OCI-LY7 (cell line): ENCODE measurements at regions of chr19 and their contacts with region 1.

Region 1: GRCh38 chr19:10565567-10566407 is at the start of gene KRI1:
- DNase-seq: peak; percentile 99
- H3K4me3 ChIP-seq: peak within 1 kb of the TSS; percentile 94
- H3K27ac ChIP-seq: peak within 1 kb of the TSS; percentile 81
- H3K4me1 ChIP-seq: peaks cover 33% of the 10 kb centered on the region
- CTCF ChIP-seq: peak; percentile 52
- total RNA-seq, gene KRI1: 44.9 and 53.6 TPM in 2 replicates

Region 2: DNA sequence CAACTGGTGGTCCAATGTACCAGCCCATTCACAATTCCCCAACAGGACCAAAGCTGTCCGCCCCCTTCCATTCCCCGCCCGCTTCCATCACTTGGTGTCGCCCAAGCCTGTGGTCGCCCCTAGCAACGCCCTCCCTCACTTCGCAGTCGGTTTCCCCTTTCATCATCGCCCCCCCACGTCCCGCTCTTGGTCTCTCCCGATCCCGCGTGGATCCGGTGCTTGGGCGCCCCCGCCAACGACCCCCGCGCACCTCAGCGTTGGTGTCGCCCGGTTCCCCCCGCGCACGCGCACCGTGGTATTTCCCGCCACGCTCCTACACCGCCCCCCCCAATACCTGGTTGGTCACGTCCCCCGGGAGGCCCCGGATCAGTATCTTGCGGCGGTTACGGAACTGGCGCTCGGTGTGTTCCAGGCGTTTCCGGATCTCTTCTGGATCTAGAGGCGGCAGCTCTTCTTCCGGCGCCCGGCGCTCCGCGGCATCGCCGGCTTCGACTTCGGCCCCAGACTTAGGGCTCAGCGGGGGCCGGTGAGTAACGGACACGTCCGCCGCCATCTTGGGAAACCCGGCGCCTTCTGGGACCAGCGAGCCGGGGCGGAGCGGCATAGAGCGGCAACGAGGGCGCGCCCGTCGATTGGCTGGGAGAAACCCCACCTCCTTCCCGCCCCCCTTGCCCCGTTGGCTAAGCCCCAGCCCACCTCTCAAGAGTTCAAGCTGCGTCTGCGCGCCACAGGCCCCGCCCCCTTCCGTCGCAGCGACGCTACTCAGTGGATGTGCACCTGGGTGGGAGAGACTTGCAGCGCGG is 232.6 kb before region 1 on chr19 and contains the start of gene RAVER1:
- CTCF ChIA-PET with region 1: no interaction called
- POLR2A ChIA-PET with region 1: no interaction called
- intact Hi-C with region 1: loop called (anchors 10 kb)
- DNase-seq: peak; percentile 99
- H3K4me3 ChIP-seq: peak within 1 kb of the TSS; percentile 83
- H3K27ac ChIP-seq: peak within 1 kb of the TSS; percentile 82
- H3K4me1 ChIP-seq: peaks cover 29% of the 10 kb centered on the region
- CTCF ChIP-seq: no peak
- total RNA-seq, gene RAVER1: 21.6 and 35.7 TPM in 2 replicates

Region 3: GRCh38 chr19:10478903-10479384 is 86.8 kb before region 1 on chr19:
- CTCF ChIA-PET with region 1: no interaction called
- POLR2A ChIA-PET with region 1: no interaction called
- intact Hi-C with region 1: loop called (anchors 5 kb)
- DNase-seq: peak; percentile 41
- H3K4me3 ChIP-seq: no peak overlapping the region
- H3K27ac ChIP-seq: no peak overlapping the region
- H3K4me1 ChIP-seq: no peaks in the 10 kb centered on the region
- CTCF ChIP-seq: peak; percentile 56

Region 4: DNA sequence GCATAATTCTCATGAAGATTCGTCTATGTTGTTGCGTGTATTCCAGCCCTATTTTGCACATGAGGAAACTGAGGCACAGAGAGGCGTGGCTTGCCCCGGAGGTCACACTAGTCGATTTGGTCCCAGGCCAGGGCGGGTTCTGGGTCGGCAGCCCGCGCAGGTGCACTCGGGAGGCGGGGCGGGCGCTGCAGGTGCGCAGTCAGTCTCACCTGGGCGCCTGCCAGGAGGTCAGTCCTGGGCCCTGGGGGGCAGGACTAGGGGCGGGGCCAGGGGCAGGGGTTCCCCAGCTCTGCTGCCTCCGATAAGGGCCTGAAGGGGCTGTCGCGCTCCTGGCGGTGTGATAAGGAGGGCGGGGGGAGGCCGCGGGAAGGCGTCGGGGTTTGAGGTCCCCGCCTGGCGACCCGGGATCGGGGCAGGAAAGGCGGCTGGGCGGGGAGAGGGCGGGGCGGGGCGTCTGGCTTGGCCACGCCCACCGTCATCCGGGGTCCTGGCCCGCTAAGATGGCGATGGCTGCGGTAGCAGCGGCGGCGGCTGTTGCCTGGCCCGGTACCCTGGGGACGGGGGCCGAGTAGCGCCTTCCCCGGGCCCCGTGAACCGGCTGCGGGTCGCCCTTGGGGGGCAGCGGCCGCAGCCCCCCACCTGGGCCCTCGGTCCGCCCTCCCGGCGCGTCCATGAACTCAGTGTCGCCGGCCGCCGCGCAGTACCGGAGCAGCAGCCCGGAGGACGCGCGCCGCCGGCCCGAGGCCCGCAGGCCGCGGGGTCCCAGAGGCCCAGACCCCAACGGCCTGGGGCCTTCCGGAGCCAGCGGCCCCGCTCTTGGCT is 22.2 kb before region 1 on chr19 and contains the start of gene ATG4D:
- CTCF ChIA-PET with region 1: no interaction called
- POLR2A ChIA-PET with region 1: no interaction called
- intact Hi-C with region 1: loop called (anchors 1 kb)
- DNase-seq: peak; percentile 83
- H3K4me3 ChIP-seq: peak within 1 kb of the TSS; percentile 96
- H3K27ac ChIP-seq: peak within 1 kb of the TSS; percentile 35
- H3K4me1 ChIP-seq: peaks cover 17% of the 10 kb centered on the region
- CTCF ChIP-seq: no peak
- total RNA-seq, gene ATG4D: 21.1 and 29.6 TPM in 2 replicates

Region 5: DNA sequence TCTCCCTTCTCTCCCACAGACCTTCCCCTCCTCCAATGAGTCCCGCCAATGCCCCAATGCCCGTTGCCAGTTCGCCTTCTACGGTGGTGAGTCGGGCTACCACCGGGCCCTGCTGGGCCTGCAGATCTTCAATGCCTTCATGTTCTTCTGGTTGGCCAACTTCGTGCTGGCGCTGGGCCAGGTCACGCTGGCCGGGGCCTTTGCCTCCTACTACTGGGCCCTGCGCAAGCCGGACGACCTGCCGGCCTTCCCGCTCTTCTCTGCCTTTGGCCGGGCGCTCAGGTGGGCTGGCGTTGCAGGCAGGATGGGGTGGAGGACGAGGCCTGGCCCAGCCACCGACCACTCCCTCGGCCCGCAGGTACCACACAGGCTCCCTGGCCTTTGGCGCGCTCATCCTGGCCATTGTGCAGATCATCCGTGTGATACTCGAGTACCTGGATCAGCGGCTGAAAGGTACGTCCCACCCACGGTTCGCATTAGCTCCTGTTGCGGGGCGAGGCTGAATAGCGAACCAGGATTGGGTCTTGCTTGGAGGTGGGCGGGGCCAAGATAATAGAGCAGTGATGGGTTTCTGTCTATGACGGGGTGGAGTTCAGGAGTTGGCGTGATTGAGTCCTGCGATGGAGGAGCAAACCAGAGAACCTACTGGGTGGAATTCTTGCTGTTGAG is 70.7 kb after region 1 on chr19:
- CTCF ChIA-PET with region 1: no interaction called
- POLR2A ChIA-PET with region 1: no interaction called
- intact Hi-C with region 1: no loop called
- DNase-seq: no peak
- H3K4me3 ChIP-seq: no peak overlapping the region
- H3K27ac ChIP-seq: no peak overlapping the region
- H3K4me1 ChIP-seq: no peaks in the 10 kb centered on the region
- CTCF ChIP-seq: no peak

Region 6: DNA sequence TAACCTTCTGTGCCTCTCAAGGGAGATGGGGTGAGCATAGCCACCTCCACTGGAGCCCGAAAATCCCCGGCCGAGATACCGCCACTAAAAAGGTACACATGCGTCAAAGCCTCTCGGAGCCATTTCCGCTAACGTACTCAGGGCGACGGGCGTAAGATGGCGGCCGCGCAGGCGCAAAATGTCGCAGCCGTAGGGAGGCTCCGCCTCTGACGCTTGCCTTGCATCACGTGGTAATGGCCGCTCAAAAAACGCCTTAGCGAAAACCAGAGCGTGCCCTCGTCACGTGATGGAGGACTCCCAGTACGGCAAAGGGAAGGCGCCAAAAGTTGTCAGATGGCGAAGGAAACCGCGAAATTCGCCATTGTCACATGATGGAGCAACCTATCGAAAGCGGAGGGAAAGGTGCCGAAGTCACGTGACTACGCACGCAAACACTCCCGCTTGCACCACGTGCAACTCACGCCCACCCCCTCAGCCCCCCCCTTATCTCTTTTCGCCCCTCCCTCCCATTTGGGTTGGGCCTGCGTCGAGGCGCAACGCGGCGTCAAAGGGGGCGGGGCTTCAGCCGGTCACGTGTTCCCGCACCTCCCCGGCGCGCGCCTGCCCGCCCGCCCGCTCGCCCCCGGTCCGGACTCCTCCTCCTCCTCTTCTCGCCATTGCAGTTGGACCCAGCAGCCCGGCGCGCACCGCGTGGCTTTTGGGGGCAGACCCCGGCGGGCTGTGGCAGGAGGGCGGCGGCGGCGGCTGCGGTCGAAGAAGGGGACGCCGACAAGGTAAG is 88.1 kb after region 1 on chr19 and contains the start of gene ILF3:
- CTCF ChIA-PET with region 1: no interaction called
- POLR2A ChIA-PET with region 1: no interaction called
- intact Hi-C with region 1: loop called (anchors 5 kb)
- DNase-seq: peak; percentile 100
- H3K4me3 ChIP-seq: peak within 1 kb of the TSS; percentile 100
- H3K27ac ChIP-seq: peak within 1 kb of the TSS; percentile 88
- H3K4me1 ChIP-seq: peaks cover 41% of the 10 kb centered on the region
- CTCF ChIP-seq: no peak
- total RNA-seq, gene ILF3: 308 and 347 TPM in 2 replicates

Region 7: DNA sequence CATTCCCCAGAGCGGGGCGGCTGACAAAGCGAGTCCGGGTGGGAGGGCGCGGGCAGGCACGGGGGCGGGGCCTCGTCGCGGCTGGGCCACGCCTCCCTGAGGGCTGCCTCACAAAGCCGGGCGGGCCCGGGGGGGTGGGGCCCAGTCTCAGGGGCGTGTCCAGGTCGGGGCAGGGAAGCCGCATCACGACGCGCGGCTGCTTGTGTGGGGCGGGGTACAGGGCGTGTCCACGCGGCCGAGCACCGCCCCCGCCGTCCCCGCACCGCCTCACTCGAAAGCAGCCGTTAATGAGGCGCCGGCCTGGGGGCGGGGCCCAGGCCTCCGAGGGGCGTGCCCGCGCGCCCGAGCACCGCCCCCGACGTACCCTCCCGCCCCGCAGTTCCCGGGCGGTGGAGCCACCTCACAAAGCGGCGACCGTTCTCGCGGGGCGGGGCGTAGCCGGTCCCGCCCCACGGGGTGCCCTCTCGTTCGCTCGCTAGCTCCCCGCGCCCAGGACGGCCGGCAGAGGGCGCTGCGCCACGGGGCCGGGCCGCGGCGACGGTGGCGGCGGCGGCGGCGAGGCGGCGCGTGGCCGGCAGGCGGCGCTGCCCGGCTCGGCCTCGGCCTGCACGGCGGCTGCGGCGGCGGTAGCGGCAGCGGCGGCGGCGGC is 305.3 kb after region 1 on chr19 and contains the start of gene CARM1:
- CTCF ChIA-PET with region 1: no interaction called
- POLR2A ChIA-PET with region 1: no interaction called
- intact Hi-C with region 1: loop called (anchors 10 kb)
- DNase-seq: peak; percentile 97
- H3K4me3 ChIP-seq: peak within 1 kb of the TSS; percentile 99
- H3K27ac ChIP-seq: peak within 1 kb of the TSS; percentile 90
- H3K4me1 ChIP-seq: peaks cover 54% of the 10 kb centered on the region
- CTCF ChIP-seq: peak; percentile 52; the same call in 1 of the 2 replicates
- total RNA-seq, gene CARM1: 35.1 and 41.2 TPM in 2 replicates